ENCODE measurements at regions of chr10 and their contacts with region 1.

Region 1: DNA sequence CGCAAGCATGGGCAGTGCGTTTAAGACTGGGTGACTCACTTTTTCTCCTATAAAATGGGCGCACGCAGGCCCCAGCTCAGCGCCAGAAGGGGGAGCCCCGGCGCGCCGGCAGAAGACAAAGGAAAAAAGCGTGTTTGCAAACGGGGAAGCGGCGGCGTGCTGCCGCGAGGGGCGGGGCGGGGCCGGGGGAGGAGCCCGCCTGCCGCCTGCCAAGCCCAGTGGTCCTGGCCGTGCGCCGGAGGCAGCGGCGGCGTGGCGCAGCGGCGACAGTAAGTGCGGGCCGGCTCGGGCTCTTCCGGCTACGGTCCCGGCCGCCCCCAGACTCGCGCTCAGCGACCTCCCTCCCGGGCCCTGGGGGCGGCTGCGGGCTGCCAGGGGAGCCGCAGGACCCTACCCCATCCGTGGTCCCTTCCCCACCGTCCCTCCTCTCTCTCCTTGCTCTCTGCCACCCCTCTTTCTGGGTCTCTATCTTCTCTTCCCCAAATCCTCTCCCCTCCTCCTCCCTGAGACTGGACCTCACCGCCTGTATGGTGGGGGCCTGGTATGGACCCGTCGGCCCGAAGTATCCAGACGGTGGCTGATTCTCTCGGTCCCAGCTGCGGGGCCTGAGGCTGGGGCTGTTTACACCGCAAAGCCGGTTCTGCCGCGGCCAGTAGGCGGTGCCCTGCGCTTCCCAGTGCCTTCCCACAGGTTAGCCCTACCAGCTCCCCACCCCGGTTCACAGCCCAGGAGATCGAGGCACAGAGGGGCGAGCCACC is at the start of gene SLC29A3:
- DNase-seq: peak; percentile 85
- ATAC-seq: peak; percentile 90
- H3K4me3 Mint-ChIP-seq: peak within 1 kb of the TSS; percentile 98
- H3K27ac Mint-ChIP-seq: peak within 1 kb of the TSS; percentile 93
- H3K4me1 Mint-ChIP-seq: peaks cover 18% of the 10 kb centered on the region
- H3K27me3 Mint-ChIP-seq: no peaks in the 10 kb centered on the region
- CTCF ChIP-seq: peak; percentile 38
- total RNA-seq, gene SLC29A3: 9.2 to 11.1 TPM (median 11.0 TPM) in 3 replicates

Region 2: GRCh38 chr10:71193516-71193915 is 125.7 kb before region 1 on chr10:
- CTCF ChIA-PET with region 1: no interaction called
- POLR2A ChIA-PET with region 1: no interaction called
- DNase-seq: no peak
- ATAC-seq: no peak
- H3K4me3 Mint-ChIP-seq: no peak overlapping the region
- H3K27ac Mint-ChIP-seq: no peak overlapping the region
- H3K4me1 Mint-ChIP-seq: peaks cover 10% of the 10 kb centered on the region
- H3K27me3 Mint-ChIP-seq: peaks cover 2% of the 10 kb centered on the region
- CTCF ChIP-seq: no peak

Region 3: DNA sequence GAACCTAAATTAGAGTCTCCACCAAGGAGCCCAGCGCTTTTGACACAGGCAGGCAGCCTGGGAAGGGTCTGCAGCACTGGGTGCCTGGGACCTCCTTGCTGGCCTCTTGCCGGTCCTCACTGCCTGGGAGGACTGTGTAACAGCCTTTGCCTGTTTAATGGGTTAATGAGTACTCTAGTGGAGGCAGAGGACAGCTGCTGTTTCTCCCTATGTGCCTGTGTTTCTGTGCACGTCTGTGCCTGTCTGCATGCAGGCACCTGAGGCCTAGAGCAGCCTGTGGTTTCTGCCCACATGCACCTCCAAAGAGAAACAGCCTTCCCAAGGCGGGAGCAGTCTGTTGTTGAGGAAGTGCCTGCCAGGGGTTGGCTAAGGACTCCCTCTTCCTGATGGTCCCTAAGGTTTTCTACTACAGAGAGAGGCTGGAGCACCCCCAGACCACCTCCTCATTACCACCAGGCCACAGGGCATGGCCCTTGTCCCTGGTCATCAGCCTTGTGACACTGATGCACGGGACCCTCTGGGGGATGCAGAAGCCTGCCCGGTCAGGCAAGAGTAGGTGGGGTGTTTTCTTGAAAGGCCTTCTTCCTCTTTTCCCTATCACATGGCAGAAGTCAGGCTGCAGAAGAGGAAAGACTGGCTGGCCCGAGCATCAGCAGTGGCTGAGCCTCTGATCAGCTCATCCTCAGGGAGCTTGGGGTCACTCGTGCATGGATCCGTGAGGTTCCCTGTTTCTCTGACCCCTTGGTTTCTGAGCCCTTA is 14.1 kb after region 1 on chr10:
- CTCF ChIA-PET with region 1: interaction called, 54 read pairs
- POLR2A ChIA-PET with region 1: interaction called, 9 read pairs
- DNase-seq: no peak
- ATAC-seq: no peak
- H3K4me3 Mint-ChIP-seq: no peak overlapping the region
- H3K27ac Mint-ChIP-seq: peak overlapping the region; percentile 65; the same call in 1 of the 2 replicates
- H3K4me1 Mint-ChIP-seq: peaks cover 27% of the 10 kb centered on the region
- H3K27me3 Mint-ChIP-seq: no peaks in the 10 kb centered on the region
- CTCF ChIP-seq: no peak

Region 4: DNA sequence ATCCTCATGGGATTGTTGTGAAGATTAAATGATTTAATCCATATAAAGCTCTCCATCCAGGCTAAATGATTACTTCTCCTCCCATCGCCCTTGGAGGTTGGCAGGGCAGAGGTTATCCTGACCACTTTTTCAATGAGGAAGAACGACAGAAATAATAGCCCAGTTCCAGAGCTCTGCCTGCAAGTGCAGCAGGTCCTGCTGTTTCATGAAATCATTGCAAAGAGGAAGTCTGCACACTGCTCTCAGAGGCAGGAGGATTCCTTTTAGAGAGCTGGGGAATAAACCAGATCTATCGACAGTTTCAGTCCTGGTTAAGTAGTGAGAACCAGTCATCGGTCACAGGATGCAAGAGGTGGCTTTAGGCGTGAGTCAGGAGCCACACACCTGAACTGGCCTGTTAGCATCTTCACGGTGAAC is 52.5 kb after region 1 on chr10:
- CTCF ChIA-PET with region 1: interaction called, 107 read pairs
- POLR2A ChIA-PET with region 1: no interaction called
- DNase-seq: no peak
- ATAC-seq: no peak
- H3K4me3 Mint-ChIP-seq: no peak overlapping the region
- H3K27ac Mint-ChIP-seq: no peak overlapping the region
- H3K4me1 Mint-ChIP-seq: no peaks in the 10 kb centered on the region
- H3K27me3 Mint-ChIP-seq: peaks cover 6% of the 10 kb centered on the region; the same call in 1 of the 2 replicates
- CTCF ChIP-seq: no peak

Region 5: DNA sequence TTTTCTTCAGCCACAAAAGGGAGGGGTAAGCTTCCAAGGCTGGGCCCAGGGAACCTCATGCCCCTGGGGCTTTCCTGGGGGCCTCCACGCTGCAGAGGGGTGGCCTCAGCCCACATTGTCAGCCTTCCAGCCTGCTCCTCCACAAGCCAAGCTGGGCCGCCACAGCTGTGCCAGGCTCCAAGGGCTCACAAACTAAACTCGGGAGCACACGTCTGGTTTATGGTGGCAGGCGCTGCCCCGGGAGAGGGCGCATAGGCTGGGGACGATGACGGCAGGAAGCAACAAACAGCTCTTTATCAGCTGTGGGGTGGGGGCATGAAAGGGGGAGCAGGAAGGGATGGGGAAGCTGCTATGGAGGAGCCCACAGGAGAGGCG is 71.2 kb after region 1 on chr10:
- CTCF ChIA-PET with region 1: interaction called, 120 read pairs
- POLR2A ChIA-PET with region 1: no interaction called
- DNase-seq: no peak
- ATAC-seq: peak; percentile 36
- H3K4me3 Mint-ChIP-seq: no peak overlapping the region
- H3K27ac Mint-ChIP-seq: no peak overlapping the region
- H3K4me1 Mint-ChIP-seq: 0 out of 2 replicates have a peak, but pooled peaks cover 2% of the 10 kb centered on the region
- H3K27me3 Mint-ChIP-seq: peaks cover 16% of the 10 kb centered on the region
- CTCF ChIP-seq: no peak

Region 6: DNA sequence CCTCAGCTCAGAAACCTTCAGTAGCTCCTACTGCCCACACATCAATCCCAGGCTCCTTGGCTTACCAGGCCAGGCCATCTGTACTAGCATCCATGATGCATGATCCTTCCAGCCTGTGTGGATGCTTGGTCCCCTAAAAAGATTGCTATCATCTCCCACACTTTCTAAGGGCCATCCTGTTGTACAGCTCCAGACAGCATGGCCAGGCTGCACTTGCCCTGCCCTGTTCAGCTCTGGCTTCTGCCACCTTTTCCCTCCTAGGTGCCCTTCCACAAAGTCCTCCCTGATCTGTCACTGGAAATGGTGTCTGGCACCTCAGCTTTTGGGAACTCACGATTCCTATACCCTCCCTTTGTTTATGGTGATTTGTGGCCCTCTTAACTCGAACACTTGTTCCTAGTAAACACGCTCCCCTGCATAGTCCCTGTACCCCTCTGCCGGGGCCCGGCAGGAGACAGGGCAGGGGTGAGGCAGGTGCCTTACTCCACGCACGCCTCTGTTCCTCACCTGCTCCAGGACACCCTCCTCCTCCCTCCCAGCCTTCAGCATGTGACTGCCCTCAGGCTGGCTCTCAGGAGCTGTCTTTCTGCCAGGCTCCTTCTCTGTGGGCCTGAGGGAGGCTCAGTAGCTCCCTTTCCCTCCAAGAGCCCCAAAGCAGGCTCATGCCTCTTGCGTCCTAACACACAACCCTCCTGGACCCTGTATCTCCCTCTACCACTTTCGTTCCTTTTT is 149.3 kb after region 1 on chr10:
- CTCF ChIA-PET with region 1: interaction called, 32 read pairs
- POLR2A ChIA-PET with region 1: no interaction called
- DNase-seq: no peak
- ATAC-seq: no peak
- H3K4me3 Mint-ChIP-seq: no peak overlapping the region
- H3K27ac Mint-ChIP-seq: no peak overlapping the region
- H3K4me1 Mint-ChIP-seq: no peaks in the 10 kb centered on the region
- H3K27me3 Mint-ChIP-seq: no peaks in the 10 kb centered on the region
- CTCF ChIP-seq: no peak

Region 7: GRCh38 chr10:71708301-71708703 is 389.1 kb after region 1 on chr10:
- CTCF ChIA-PET with region 1: interaction called, 78 read pairs
- POLR2A ChIA-PET with region 1: no interaction called
- DNase-seq: peak; percentile 92
- ATAC-seq: peak; percentile 94
- H3K4me3 Mint-ChIP-seq: no peak overlapping the region; the same call in 1 of the 2 replicates
- H3K27ac Mint-ChIP-seq: no peak overlapping the region
- H3K4me1 Mint-ChIP-seq: peaks cover 4% of the 10 kb centered on the region
- H3K27me3 Mint-ChIP-seq: no peaks in the 10 kb centered on the region; the same call in 1 of the 2 replicates
- CTCF ChIP-seq: peak; percentile 84

Measured in WTC11 (cell line).